ENCODE measurements at regions of chr17 and their contacts with region 1.

Region 1: GRCh38 chr17:2929881-2930533 is 133.4 kb downstream of the OR1D5 start:
- DNase-seq: peak; percentile 85
- H3K4me3 ChIP-seq: no peak overlapping the region; a peak in 1 of 4 replicates
- H3K27ac ChIP-seq: peak overlapping the region in 1 of 2 experiments; percentile 94; a peak in 2 of 4 replicates
- H3K4me1 ChIP-seq: peaks cover 6 to 59% of the 10 kb centered on the region in 2 experiments; a peak in 2 of 4 replicates
- H3K27me3 ChIP-seq: no peaks in the 10 kb centered on the region
- CTCF ChIP-seq: peak; percentile 76
- EP300 ChIP-seq: 0 out of 4 replicates have a peak, but pooled peaks of 1 of the 2 experiments have one; percentile 24
- RAD21 ChIP-seq: peak; percentile 87

Region 2: DNA sequence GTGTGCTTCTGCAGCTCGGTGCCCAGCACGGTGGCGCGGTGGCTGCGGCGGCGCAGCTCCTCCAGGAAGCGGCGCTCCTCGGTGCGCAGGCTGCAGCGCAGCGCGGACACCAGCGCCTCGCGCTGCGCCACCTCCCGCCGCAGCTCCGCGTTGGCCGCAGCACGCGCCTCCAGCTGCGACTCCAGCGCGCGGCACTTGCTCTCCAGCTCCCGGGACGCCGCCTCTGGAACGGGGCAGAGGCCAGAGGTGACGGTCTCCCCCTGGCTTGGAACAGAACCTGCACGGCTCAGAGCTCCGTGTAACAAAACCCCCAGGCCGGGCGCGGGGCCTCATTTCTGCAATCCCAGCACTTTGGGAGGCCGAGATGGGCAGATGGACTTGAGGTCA is 205.2 kb before region 1 on chr17:
- CTCF ChIA-PET with region 1: no interaction called
- POLR2A ChIA-PET with region 1: no interaction called
- DNase-seq: no peak
- H3K4me3 ChIP-seq: no peak overlapping the region
- H3K27ac ChIP-seq: no peak overlapping the region
- H3K4me1 ChIP-seq: no peaks in the 10 kb centered on the region
- H3K27me3 ChIP-seq: no peaks in the 10 kb centered on the region
- CTCF ChIP-seq: no peak
- EP300 ChIP-seq: no peak
- RAD21 ChIP-seq: no peak

Region 3: DNA sequence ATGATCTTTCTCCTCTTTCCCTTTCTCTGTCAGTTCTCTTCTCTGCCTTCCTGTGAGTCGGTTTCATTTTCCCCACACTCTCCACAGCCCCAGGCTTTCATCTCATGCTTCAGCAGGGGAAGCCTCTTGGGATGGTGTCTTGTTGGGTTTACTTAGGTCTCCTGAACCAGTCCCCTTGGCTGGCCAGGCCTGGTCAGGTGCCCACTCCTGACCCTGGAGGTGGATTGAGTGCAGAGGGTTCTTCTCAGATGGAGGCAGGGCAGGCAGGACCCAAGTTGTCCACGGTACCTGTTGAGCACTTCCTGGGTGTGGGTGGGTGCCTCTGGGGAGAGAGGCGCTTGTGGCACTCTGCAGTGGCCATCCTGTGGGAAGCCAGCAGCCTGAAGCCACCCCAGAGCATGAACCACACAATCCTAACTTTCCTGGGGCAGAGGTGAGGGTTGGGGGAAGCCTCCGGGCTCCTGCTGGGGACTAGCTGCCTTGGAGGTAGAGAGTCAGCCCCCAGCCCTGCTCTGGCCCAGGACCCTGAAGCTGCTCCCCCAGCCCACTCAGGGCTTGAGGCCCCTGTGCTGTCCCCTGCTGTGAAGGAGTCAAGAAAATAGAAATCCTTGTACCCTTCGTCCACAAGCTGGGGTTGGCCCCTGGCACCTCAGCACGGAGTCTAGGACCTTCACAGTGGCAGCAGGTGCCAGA is 135.8 kb before region 1 on chr17:
- CTCF ChIA-PET with region 1: no interaction called
- POLR2A ChIA-PET with region 1: no interaction called
- DNase-seq: no peak
- H3K4me3 ChIP-seq: no peak overlapping the region
- H3K27ac ChIP-seq: no peak overlapping the region
- H3K4me1 ChIP-seq: peaks cover 0 to 22% of the 10 kb centered on the region in 2 experiments; a peak in 1 of 4 replicates
- H3K27me3 ChIP-seq: no peaks in the 10 kb centered on the region
- CTCF ChIP-seq: no peak
- EP300 ChIP-seq: no peak
- RAD21 ChIP-seq: no peak

Region 4: GRCh38 chr17:2853111-2853721 is 76.8 kb before region 1 on chr17:
- CTCF ChIA-PET with region 1: interaction called, 135 read pairs
- POLR2A ChIA-PET with region 1: interaction called, 17 read pairs
- DNase-seq: peak; percentile 79
- H3K4me3 ChIP-seq: peak overlapping the region; percentile 66 to 69
- H3K27ac ChIP-seq: peak overlapping the region; percentile 66 to 90
- H3K4me1 ChIP-seq: peaks cover 4 to 42% of the 10 kb centered on the region in 2 experiments; a peak in 2 of 4 replicates
- H3K27me3 ChIP-seq: no peaks in the 10 kb centered on the region
- CTCF ChIP-seq: no peak
- EP300 ChIP-seq: no peak
- RAD21 ChIP-seq: no peak

Region 5: GRCh38 chr17:2904152-2904551 is 25.9 kb before region 1 on chr17:
- CTCF ChIA-PET with region 1: interaction called, 177 read pairs
- POLR2A ChIA-PET with region 1: interaction called, 42 read pairs
- DNase-seq: peak; percentile 78
- H3K4me3 ChIP-seq: no peak overlapping the region
- H3K27ac ChIP-seq: peak overlapping the region in 1 of 2 experiments; percentile 97; a peak in 2 of 4 replicates
- H3K4me1 ChIP-seq: peaks cover 0 to 80% of the 10 kb centered on the region in 2 experiments; a peak in 1 of 4 replicates
- H3K27me3 ChIP-seq: no peaks in the 10 kb centered on the region
- CTCF ChIP-seq: no peak
- EP300 ChIP-seq: peak in 1 of 2 experiments; percentile 62; a peak in 1 of 4 replicates
- RAD21 ChIP-seq: no peak; the same call in 1 of the 2 replicates

Region 6: GRCh38 chr17:2909175-2909845 is 20.7 kb before region 1 on chr17:
- CTCF ChIA-PET with region 1: interaction called, 177 read pairs
- POLR2A ChIA-PET with region 1: interaction called, 42 read pairs
- DNase-seq: peak; percentile 69
- H3K4me3 ChIP-seq: no peak overlapping the region
- H3K27ac ChIP-seq: peak overlapping the region in 1 of 2 experiments; percentile 91; a peak in 2 of 4 replicates
- H3K4me1 ChIP-seq: peaks cover 0 to 74% of the 10 kb centered on the region in 2 experiments; a peak in 1 of 4 replicates
- H3K27me3 ChIP-seq: no peaks in the 10 kb centered on the region
- CTCF ChIP-seq: no peak
- EP300 ChIP-seq: peak in 1 of 2 experiments; percentile 21; a peak in 1 of 4 replicates
- RAD21 ChIP-seq: peak; percentile 39